Activated naive CD4-positive, alpha-beta T cell treated with anti-CD3 and anti-CD28 coated beads for 36 hours (primary cell): ENCODE measurements at regions of chr2 and their contacts with region 1.

Region 1: DNA sequence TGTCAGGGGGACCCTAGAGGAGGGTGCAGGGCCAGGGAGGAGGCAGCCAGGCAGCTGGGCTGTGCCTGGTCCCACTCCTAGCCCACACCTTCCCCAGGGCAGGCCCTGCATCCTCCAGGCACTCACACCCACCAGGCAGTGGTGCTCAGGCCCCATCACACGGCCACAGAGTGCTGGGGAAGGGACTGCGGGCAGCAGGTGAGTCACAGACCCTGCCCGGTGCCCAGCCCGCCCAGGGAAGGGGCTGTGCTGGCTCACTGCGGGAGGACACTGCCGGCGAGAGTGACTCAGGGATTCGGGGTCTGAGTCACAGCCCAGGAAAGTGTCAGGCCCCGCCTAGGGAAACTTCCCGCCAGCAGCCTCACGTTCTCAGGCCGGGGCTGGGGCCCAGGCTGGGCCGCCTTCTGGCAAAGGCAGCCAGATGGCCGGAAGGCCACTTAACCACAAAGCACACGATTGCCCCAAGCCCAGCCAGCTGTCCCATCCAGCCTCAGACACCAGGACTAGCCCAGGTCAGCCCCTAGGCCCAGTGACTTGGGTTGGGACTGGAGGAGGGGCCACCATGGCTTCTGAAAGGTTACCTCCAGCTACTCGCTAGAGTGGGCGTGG is 42.2 kb downstream of the BIN1 start:
- DNase-seq: peak; percentile 85
- H3K4me3 Mint-ChIP-seq: no peak overlapping the region
- H3K27ac Mint-ChIP-seq: peak overlapping the region; percentile 75
- H3K4me1 Mint-ChIP-seq: peaks cover 26% of the 10 kb centered on the region
- H3K27me3 Mint-ChIP-seq: no peaks in the 10 kb centered on the region

Region 2: DNA sequence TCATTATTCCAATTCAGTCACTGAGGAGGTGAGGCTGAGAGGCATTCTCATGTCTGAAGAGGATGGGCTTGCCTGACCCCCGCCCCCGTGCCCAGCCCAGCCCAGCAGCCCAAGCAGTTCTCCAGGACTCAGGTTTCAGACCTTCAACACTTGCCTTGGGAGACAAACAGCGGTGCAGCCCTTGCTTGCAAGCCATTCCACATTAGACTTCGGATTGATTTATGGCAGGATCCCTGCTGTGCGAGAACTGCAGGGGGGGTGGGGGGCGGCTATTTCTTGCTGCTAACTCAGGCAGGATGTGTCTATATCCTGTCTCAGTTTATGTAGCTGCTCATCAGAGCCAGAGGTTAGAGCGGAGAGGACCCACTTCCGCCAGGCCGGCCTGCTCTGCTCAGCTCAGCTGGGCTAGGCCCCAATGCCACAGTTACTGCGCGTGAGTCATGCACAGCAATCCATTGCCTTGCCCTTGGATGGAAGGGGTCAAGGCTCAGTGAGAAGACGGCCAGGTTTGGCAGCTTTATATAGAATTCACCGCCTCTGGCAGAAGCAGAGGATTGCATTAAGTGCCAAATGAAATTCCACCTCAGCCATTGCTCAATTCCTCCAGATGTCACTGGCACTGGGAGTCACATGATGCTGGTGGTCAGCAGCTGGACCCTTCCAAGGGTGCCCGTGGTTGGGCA is 407.0 kb before region 1 on chr2:
- CTCF ChIA-PET with region 1: no interaction called
- intact Hi-C with region 1: loop called (anchors 1 kb)
- DNase-seq: peak; percentile 87
- H3K4me3 Mint-ChIP-seq: peak overlapping the region; percentile 100
- H3K27ac Mint-ChIP-seq: peak overlapping the region; percentile 100
- H3K4me1 Mint-ChIP-seq: peaks cover 61% of the 10 kb centered on the region
- H3K27me3 Mint-ChIP-seq: no peaks in the 10 kb centered on the region

Region 3: GRCh38 chr2:126704434-126705160 is 360.1 kb before region 1 on chr2:
- CTCF ChIA-PET with region 1: no interaction called
- intact Hi-C with region 1: no loop called
- DNase-seq: no peak
- H3K4me3 Mint-ChIP-seq: no peak overlapping the region
- H3K27ac Mint-ChIP-seq: no peak overlapping the region
- H3K4me1 Mint-ChIP-seq: no peaks in the 10 kb centered on the region
- H3K27me3 Mint-ChIP-seq: no peaks in the 10 kb centered on the region

Region 4: GRCh38 chr2:127106951-127107621 is 42.3 kb after region 1 on chr2 and contains the start of gene BIN1:
- CTCF ChIA-PET with region 1: interaction called, 6 read pairs
- intact Hi-C with region 1: loop called (anchors 1 kb)
- DNase-seq: peak; percentile 83
- H3K4me3 Mint-ChIP-seq: peak within 1 kb of the TSS; percentile 72
- H3K27ac Mint-ChIP-seq: no peak within 1 kb of the TSS
- H3K4me1 Mint-ChIP-seq: peaks cover 3% of the 10 kb centered on the region
- H3K27me3 Mint-ChIP-seq: peaks cover 9% of the 10 kb centered on the region
- total RNA-seq, gene BIN1: 50.4 to 51.1 TPM

Region 5: GRCh38 chr2:127174136-127174535 is 109.4 kb after region 1 on chr2:
- CTCF ChIA-PET with region 1: interaction called, 4 read pairs
- intact Hi-C with region 1: loop called (anchors 1 kb)
- DNase-seq: no peak
- H3K4me3 Mint-ChIP-seq: no peak overlapping the region
- H3K27ac Mint-ChIP-seq: no peak overlapping the region
- H3K4me1 Mint-ChIP-seq: no peaks in the 10 kb centered on the region
- H3K27me3 Mint-ChIP-seq: no peaks in the 10 kb centered on the region

Region 6: GRCh38 chr2:127293748-127294562 is 229.2 kb after region 1 on chr2 and contains the start of gene ERCC3:
- CTCF ChIA-PET with region 1: interaction called, 3 read pairs
- intact Hi-C with region 1: loop called (anchors 2 kb)
- DNase-seq: peak; percentile 88
- H3K4me3 Mint-ChIP-seq: peak within 1 kb of the TSS; percentile 99
- H3K27ac Mint-ChIP-seq: peak within 1 kb of the TSS; percentile 95
- H3K4me1 Mint-ChIP-seq: peaks cover 25% of the 10 kb centered on the region
- H3K27me3 Mint-ChIP-seq: no peaks in the 10 kb centered on the region
- total RNA-seq, gene ERCC3: 37.0 to 41.1 TPM

Region 7: GRCh38 chr2:127479219-127479825 is 414.6 kb after region 1 on chr2:
- CTCF ChIA-PET with region 1: no interaction called
- intact Hi-C with region 1: loop called (anchors 1 kb)
- DNase-seq: no peak
- H3K4me3 Mint-ChIP-seq: no peak overlapping the region
- H3K27ac Mint-ChIP-seq: no peak overlapping the region
- H3K4me1 Mint-ChIP-seq: no peaks in the 10 kb centered on the region
- H3K27me3 Mint-ChIP-seq: no peaks in the 10 kb centered on the region